Activated naive CD4-positive, alpha-beta T cell treated with anti-CD3 and anti-CD28 coated beads for 36 hours (primary cell): ENCODE measurements at regions of chr1 and their contacts with region 1.

Region 1: GRCh38 chr1:192983349-192983980 is 75.7 kb downstream of the UCHL5 start:
- DNase-seq: peak; percentile 58
- H3K4me3 Mint-ChIP-seq: no peak overlapping the region
- H3K27ac Mint-ChIP-seq: peak overlapping the region; percentile 67
- H3K4me1 Mint-ChIP-seq: peaks cover 25% of the 10 kb centered on the region
- H3K27me3 Mint-ChIP-seq: no peaks in the 10 kb centered on the region

Region 2: GRCh38 chr1:192826791-192827477 is 156.5 kb before region 1 on chr1:
- CTCF ChIA-PET with region 1: no interaction called
- intact Hi-C with region 1: no loop called
- DNase-seq: no peak
- H3K4me3 Mint-ChIP-seq: no peak overlapping the region
- H3K27ac Mint-ChIP-seq: no peak overlapping the region
- H3K4me1 Mint-ChIP-seq: no peaks in the 10 kb centered on the region
- H3K27me3 Mint-ChIP-seq: peaks cover 14% of the 10 kb centered on the region

Region 3: DNA sequence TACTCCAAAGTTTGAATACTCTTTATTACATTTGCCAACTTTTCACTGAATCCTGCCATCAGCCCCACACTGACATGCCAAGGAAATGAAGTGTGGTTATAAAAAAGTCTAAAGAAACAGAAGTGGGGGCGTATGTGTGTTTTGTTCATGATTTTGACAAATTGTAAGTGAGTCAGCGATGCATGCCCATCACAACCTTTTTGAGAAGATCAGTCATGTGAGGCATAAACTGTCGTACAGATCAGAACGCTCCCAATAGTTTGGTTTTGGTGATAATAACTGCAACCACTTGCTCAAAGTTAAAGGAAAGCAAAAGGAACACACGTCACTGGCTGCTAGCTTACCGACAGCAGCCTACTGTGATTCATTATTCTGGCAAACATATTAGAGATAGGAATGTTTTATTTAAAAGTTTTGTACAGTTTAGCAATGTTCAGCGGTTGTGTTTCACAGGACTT is 79.0 kb before region 1 on chr1:
- CTCF ChIA-PET with region 1: no interaction called
- intact Hi-C with region 1: loop called (anchors 2 kb)
- DNase-seq: peak; percentile 56
- H3K4me3 Mint-ChIP-seq: no peak overlapping the region
- H3K27ac Mint-ChIP-seq: no peak overlapping the region
- H3K4me1 Mint-ChIP-seq: peaks cover 2% of the 10 kb centered on the region
- H3K27me3 Mint-ChIP-seq: no peaks in the 10 kb centered on the region

Region 4: DNA sequence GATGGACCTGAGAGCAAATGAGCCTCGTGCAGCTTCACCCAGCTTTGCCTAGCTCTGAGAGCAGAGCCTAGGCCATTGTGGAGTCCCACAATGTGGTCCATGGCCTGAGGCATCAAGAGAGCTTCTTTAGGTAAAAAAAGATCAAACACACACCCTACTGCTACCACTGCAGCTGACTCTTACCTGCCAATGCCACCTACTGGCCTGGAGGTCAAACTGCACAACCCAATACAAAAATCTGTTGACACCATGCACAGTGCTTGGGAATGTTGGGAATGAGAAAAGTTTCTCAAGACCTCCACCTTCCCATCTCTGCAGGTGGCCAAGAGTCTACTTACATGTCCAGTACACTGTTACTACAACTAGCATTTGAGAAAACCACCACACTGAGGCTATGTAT is 15.1 kb after region 1 on chr1:
- CTCF ChIA-PET with region 1: no interaction called
- intact Hi-C with region 1: no loop called
- DNase-seq: no peak
- H3K4me3 Mint-ChIP-seq: no peak overlapping the region
- H3K27ac Mint-ChIP-seq: no peak overlapping the region
- H3K4me1 Mint-ChIP-seq: no peaks in the 10 kb centered on the region
- H3K27me3 Mint-ChIP-seq: no peaks in the 10 kb centered on the region

Region 5: GRCh38 chr1:193121616-193122593 is 138.4 kb after region 1 on chr1 and contains the start of gene CDC73:
- CTCF ChIA-PET with region 1: no interaction called
- intact Hi-C with region 1: loop called (anchors 1 kb)
- DNase-seq: peak; percentile 97
- H3K4me3 Mint-ChIP-seq: peak within 1 kb of the TSS; percentile 92
- H3K27ac Mint-ChIP-seq: peak within 1 kb of the TSS; percentile 92
- H3K4me1 Mint-ChIP-seq: peaks cover 43% of the 10 kb centered on the region
- H3K27me3 Mint-ChIP-seq: peaks cover 1% of the 10 kb centered on the region
- total RNA-seq, gene CDC73: 39.0 to 45.2 TPM